GM10248 (cell line): ENCODE measurements at regions of chr12 and their contacts with region 1.

Region 1: GRCh38 chr12:55728939-55729823 is at the start of gene CD63:
- DNase-seq: peak; percentile 95
- CTCF ChIP-seq: peak; percentile 11

Region 2: GRCh38 chr12:55715833-55716581 is 13.2 kb before region 1 on chr12 and contains the start of gene BLOC1S1:
- CTCF ChIA-PET with region 1: interaction called, 22 read pairs
- POLR2A ChIA-PET with region 1: interaction called, 3 read pairs
- DNase-seq: peak; percentile 95
- CTCF ChIP-seq: no peak